Activated B cell treated with CpG ODN at 0.5 μM for 24 hours (primary cell): ENCODE measurements at regions of chr22 and their contacts with region 1.

Region 1: DNA sequence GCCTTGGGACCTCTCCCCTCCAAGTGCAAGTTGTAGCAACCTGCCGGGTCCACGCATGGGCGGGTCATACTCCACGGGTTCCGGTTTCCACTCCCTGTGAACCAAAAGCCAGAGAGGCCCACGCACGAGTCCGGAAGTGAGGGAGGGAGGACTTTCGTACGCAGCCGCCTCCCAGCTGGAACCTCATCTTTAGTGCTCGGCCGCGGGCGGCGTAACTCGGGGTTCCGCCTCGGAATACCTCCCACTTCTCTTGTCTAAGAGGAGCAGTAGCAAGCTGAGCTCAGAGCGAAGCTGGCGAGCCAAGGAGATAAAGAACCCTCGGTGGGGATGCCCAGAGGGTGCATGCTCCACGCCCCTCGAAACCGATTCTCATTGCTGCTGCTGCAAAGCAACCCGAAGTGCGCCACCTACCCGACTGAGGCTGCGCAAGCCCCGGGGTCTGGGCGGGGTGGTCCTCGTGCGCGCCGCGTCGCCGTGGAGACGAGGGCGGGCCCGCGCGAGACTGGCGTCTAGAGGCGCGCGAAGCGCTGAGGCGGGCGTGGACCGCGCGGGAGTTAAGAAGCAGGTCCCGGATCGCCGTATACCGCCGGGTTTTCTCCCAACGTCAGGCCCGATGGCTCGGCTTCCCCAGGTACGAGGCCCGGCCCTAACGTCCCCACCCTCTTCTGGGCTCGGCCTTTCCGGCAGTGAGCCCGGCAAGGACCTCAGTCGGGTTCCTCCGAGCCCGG is at the start of gene SFI1:
- DNase-seq: peak; percentile 96
- ATAC-seq: peak; percentile 83
- H3K4me3 Mint-ChIP-seq: peak within 1 kb of the TSS; percentile 95
- H3K27ac Mint-ChIP-seq: peak within 1 kb of the TSS; percentile 97
- H3K4me1 Mint-ChIP-seq: peaks cover 42% of the 10 kb centered on the region
- H3K27me3 Mint-ChIP-seq: no peaks in the 10 kb centered on the region
- CTCF ChIP-seq: no peak
- total RNA-seq, gene SFI1: 110 and 126 TPM in 2 replicates

Region 2: GRCh38 chr22:31345331-31346254 is 150.6 kb before region 1 on chr22:
- CTCF ChIA-PET with region 1: no interaction called
- POLR2A ChIA-PET with region 1: interaction called, 16 read pairs
- intact Hi-C with region 1: loop called (anchors 1 kb)
- DNase-seq: peak; percentile 89
- ATAC-seq: peak; percentile 58
- H3K4me3 Mint-ChIP-seq: peak overlapping the region; percentile 83
- H3K27ac Mint-ChIP-seq: peak overlapping the region; percentile 80
- H3K4me1 Mint-ChIP-seq: peaks cover 50% of the 10 kb centered on the region
- H3K27me3 Mint-ChIP-seq: no peaks in the 10 kb centered on the region
- CTCF ChIP-seq: peak; percentile 56

Region 3: DNA sequence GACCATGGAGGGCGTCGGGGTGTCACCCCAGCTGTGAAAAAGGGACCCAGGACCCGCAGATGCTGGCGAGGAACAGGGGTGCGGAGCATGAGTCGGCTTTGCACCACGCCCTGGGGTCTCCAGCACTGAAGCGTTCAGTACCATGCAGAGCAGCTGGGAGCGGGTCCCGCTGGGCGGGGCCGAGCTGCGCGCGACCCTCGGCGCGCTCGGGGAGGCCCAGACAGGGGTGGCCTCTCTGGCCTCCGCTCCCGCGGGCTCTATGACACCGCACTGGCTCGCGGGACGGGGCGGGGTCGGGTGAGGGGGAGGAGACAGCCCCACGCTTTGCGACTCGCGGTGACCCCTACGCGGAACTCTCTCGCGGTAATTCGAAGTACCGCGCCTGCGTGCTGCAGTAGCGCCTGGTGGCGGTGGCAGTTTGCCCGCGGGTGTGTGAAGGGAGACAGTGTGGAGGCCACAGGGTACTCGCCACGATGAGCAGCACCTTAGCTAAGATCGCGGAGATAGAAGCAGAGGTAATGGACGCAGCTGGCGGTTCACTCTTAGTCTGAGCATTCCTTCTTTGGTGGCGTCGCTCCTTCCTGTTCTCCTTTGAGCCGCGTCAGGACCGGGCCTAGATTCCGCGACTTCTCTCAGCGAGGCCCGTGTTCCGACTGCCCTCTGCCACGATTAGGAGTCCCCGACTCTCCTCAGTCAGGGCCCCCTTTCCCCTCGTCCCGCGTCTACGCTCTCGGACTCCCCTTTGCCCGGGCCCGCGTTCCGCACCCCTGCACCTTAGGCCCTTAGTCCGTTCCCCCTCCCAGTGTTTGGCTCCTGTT is 96.8 kb before region 1 on chr22 and contains the start of gene DRG1:
- CTCF ChIA-PET with region 1: no interaction called
- POLR2A ChIA-PET with region 1: interaction called, 3 read pairs
- intact Hi-C with region 1: loop called (anchors 2 kb)
- DNase-seq: peak; percentile 97
- ATAC-seq: peak; percentile 98
- H3K4me3 Mint-ChIP-seq: peak within 1 kb of the TSS; percentile 93
- H3K27ac Mint-ChIP-seq: peak within 1 kb of the TSS; percentile 88
- H3K4me1 Mint-ChIP-seq: peaks cover 20% of the 10 kb centered on the region
- H3K27me3 Mint-ChIP-seq: no peaks in the 10 kb centered on the region
- CTCF ChIP-seq: no peak
- total RNA-seq, gene DRG1: 68.5 and 71.1 TPM in 2 replicates

Region 4: DNA sequence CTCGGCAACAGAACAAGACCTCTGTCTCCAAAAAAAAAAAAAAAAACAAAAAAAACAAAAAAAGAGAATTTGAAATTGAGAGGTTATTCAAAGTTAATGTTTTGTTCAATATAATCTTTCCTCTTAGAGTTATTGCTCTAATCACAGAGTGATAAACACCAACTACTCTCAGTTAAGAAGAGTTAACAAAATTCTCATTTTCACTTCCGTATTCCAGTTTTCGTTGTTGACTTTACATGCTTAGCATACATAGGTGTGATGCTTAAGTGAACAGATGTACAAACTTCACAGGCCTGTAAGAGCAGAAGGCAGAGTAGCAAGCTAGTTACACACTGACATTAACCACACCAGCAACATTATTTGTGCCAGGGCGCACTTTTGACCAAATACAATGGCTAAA is 18.8 kb before region 1 on chr22:
- CTCF ChIA-PET with region 1: no interaction called
- POLR2A ChIA-PET with region 1: interaction called, 14 read pairs
- intact Hi-C with region 1: loop called (anchors 1 kb)
- DNase-seq: no peak
- ATAC-seq: peak; percentile 95
- H3K4me3 Mint-ChIP-seq: no peak overlapping the region
- H3K27ac Mint-ChIP-seq: peak overlapping the region; percentile 82
- H3K4me1 Mint-ChIP-seq: peaks cover 24% of the 10 kb centered on the region
- H3K27me3 Mint-ChIP-seq: no peaks in the 10 kb centered on the region
- CTCF ChIP-seq: no peak

Region 5: DNA sequence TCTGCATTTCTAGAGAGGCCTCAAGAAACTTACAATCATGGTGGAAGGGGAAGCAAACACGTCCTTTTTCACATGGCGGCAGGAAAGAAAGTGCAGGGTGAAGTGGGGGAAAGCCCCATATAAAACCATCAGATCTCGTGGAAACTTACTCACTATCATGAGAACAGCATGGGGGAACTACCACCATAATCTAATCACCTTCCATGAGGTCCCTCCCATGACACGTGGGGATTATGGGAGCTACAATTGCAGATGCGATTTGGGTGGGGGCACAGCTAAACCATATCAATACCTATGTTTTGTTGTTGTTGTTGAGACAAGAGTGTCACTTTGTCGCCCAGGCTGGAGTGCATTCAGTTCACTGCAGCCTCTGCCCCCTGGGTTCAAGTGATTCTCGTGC is 30.1 kb after region 1 on chr22:
- CTCF ChIA-PET with region 1: no interaction called
- POLR2A ChIA-PET with region 1: interaction called, 3 read pairs
- intact Hi-C with region 1: loop called (anchors 2 kb)
- DNase-seq: no peak
- ATAC-seq: peak; percentile 85
- H3K4me3 Mint-ChIP-seq: no peak overlapping the region
- H3K27ac Mint-ChIP-seq: peak overlapping the region; percentile 79
- H3K4me1 Mint-ChIP-seq: peaks cover 26% of the 10 kb centered on the region
- H3K27me3 Mint-ChIP-seq: no peaks in the 10 kb centered on the region
- CTCF ChIP-seq: no peak

Region 6: GRCh38 chr22:32474635-32475467 is 978.7 kb after region 1 on chr22 and contains the start of gene FBXO7:
- CTCF ChIA-PET with region 1: no interaction called
- POLR2A ChIA-PET with region 1: no interaction called
- intact Hi-C with region 1: loop called (anchors 5 kb)
- DNase-seq: peak; percentile 92
- ATAC-seq: peak; percentile 84
- H3K4me3 Mint-ChIP-seq: peak within 1 kb of the TSS; percentile 95
- H3K27ac Mint-ChIP-seq: peak within 1 kb of the TSS; percentile 91
- H3K4me1 Mint-ChIP-seq: peaks cover 30% of the 10 kb centered on the region
- H3K27me3 Mint-ChIP-seq: no peaks in the 10 kb centered on the region
- CTCF ChIP-seq: no peak
- total RNA-seq, gene FBXO7: 85.4 and 97.2 TPM in 2 replicates

Region 7: DNA sequence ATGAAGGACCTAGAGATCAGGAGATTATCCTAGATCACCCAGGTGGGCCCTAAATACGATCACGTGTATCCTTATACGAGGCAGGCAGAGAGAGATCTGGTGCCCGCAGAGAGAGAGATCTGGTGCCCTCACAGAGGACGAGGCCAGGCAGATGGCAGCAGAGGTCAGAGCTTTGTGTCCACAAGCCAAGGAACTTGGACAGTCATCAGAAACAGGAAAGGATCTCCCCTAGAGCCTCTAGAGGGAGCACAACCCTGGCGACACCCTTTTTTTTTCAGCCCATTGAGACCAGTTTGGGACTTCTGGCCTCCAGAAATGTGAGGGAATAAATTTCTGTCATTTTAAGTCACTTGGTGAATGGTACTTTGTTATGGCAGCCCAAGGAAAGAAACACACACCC is 1279.8 kb after region 1 on chr22:
- CTCF ChIA-PET with region 1: no interaction called
- POLR2A ChIA-PET with region 1: no interaction called
- intact Hi-C with region 1: no loop called
- DNase-seq: no peak
- ATAC-seq: no peak
- H3K4me3 Mint-ChIP-seq: no peak overlapping the region
- H3K27ac Mint-ChIP-seq: no peak overlapping the region
- H3K4me1 Mint-ChIP-seq: no peaks in the 10 kb centered on the region
- H3K27me3 Mint-ChIP-seq: peaks cover 7% of the 10 kb centered on the region
- CTCF ChIP-seq: no peak